ENCODE measurements at regions of chr12 and their contacts with region 1.

Region 1: GRCh38 chr12:75334384-75335030 is at the start of gene GLIPR1L1:
- DNase-seq: peak; percentile 77
- H3K4me3 ChIP-seq: peak within 1 kb of the TSS; percentile 63
- H3K27ac ChIP-seq: peak within 1 kb of the TSS; percentile 46
- H3K4me1 ChIP-seq: peaks cover 12% of the 10 kb centered on the region
- H3K27me3 ChIP-seq: no peaks in the 10 kb centered on the region
- CTCF ChIP-seq: peak; percentile 96
- total RNA-seq, gene GLIPR1L1: not detected

Region 2: DNA sequence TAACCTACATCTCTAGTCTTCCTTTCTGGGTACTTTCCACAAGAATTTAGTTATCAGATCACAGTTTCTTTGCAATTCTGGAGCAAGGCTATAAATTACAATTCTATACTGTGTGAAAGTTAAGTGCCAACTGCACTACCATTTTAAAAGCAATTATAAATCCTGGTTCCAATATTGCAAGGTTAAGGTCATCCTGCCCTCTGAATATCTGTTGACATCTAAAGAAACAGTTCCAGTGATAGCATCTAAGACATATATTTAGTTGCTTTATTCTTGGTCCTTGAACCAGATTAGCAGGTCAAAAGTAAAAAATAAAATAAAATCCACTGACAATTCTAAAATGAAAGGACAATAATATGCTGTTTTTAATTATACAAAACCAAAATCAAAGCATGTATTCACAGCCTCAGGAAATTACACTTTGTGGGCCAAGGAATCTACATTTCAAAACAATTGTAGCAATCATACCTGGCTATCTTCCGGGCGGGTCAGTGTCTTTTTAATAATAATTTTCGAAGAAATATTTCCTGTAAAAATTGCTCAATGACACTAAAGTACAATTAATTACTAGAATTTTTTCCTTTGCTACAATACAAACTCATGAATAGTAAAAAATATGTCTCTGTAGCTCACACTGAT is 462.6 kb before region 1 on chr12:
- intact Hi-C with region 1: no loop called
- DNase-seq: no peak
- H3K4me3 ChIP-seq: no peak overlapping the region
- H3K27ac ChIP-seq: no peak overlapping the region
- H3K4me1 ChIP-seq: no peaks in the 10 kb centered on the region
- H3K27me3 ChIP-seq: no peaks in the 10 kb centered on the region
- CTCF ChIP-seq: no peak

Region 3: DNA sequence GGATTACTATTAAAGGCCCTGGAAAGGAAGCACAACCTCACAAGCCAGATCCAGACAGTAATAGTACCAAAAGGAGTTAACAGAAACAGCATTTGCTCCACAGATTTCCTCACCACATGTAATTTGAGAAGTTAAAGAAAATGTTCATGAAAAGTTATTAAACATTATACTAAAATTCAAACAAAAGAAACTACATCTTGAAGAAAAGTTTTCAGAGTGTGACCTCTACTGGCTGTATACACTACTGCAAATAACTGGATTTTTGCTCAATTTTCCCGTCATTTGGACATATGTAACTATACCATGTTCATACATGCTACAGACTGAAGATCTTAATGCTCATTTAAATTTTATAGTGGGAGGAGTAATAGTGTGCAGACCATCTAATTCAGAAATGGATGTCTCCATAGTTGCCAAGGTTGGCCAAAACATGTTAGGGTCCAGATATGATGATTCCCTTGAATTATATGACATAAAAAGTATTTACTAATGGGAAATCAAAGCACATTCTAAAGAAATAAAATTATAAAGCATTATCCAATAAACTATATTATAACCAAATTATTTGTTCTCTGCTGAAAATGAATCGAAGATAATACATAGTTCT is 171.3 kb after region 1 on chr12:
- intact Hi-C with region 1: loop called (anchors 5 kb)
- DNase-seq: no peak
- H3K4me3 ChIP-seq: no peak overlapping the region
- H3K27ac ChIP-seq: no peak overlapping the region
- H3K4me1 ChIP-seq: peaks cover 32% of the 10 kb centered on the region
- H3K27me3 ChIP-seq: no peaks in the 10 kb centered on the region
- CTCF ChIP-seq: peak; percentile 59

Measured in left ventricle myocardium inferior (tissue), 1 donor.